ENCODE measurements at regions of chr3 and their contacts with region 1.

Region 1: DNA sequence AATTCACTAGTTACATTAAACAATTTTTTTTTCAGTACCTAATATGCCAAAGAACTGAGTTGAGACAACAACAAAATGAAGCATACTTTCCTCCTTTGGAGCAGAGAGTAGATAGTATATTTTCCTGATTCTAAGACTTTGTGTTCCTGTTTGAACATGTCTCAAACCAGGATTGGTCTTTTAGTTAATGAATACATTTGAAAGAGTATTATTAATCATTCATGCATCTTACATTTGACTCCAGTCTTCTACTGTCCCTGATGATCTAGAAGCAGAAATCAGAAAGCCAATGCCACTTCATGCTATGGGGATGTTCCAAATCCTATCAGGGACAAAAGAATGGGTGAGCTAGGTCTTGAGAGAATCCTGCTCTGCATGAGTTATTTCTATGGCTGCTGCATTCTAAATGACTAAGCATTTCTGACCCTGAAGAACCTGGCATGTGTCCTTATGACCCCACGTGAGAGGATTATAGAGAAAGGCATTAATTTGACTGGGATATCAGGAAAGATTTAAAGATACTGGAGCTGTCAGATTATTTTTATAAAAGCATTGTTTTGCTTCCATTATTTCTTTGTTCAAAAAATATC is 32.9 kb upstream of the MBNL1 start:
- DNase-seq: no peak
- H3K4me3 Mint-ChIP-seq: peak overlapping the region; percentile 9
- H3K27ac Mint-ChIP-seq: peak overlapping the region; percentile 75
- H3K4me1 Mint-ChIP-seq: peaks cover 84% of the 10 kb centered on the region
- H3K27me3 Mint-ChIP-seq: no peaks in the 10 kb centered on the region

Region 2: DNA sequence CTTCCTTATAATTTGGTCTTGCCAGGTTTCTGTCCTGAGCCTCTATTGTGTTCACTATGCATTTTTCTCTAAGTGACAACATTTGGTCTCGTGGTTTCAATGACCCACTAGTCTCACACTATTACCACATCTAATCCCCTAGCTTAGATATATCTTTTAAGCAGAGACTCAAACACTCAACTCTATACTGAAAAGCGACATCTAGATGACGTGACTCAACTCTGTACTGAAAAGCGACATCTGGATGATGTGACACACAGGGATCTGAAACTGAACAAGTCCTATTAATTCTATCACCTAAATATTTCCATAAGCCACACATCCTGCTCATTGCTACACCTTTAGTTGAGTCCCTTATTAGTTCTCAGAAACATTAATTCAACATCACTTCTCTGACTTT is 108.7 kb before region 1 on chr3:
- CTCF ChIA-PET with region 1: no interaction called
- intact Hi-C with region 1: loop called (anchors 5 kb)
- DNase-seq: peak; percentile 53
- H3K4me3 Mint-ChIP-seq: no peak overlapping the region
- H3K27ac Mint-ChIP-seq: no peak overlapping the region
- H3K4me1 Mint-ChIP-seq: peaks cover 29% of the 10 kb centered on the region
- H3K27me3 Mint-ChIP-seq: no peaks in the 10 kb centered on the region

Region 3: GRCh38 chr3:152205097-152205593 is 30.7 kb before region 1 on chr3:
- CTCF ChIA-PET with region 1: interaction called, 4 read pairs
- intact Hi-C with region 1: loop called (anchors 1 kb)
- DNase-seq: no peak
- H3K4me3 Mint-ChIP-seq: peak overlapping the region; percentile 89
- H3K27ac Mint-ChIP-seq: peak overlapping the region; percentile 99
- H3K4me1 Mint-ChIP-seq: peaks cover 67% of the 10 kb centered on the region
- H3K27me3 Mint-ChIP-seq: no peaks in the 10 kb centered on the region

Region 4: GRCh38 chr3:152564459-152564858 is 328.7 kb after region 1 on chr3:
- CTCF ChIA-PET with region 1: no interaction called
- intact Hi-C with region 1: no loop called
- DNase-seq: no peak
- H3K4me3 Mint-ChIP-seq: no peak overlapping the region
- H3K27ac Mint-ChIP-seq: no peak overlapping the region
- H3K4me1 Mint-ChIP-seq: no peaks in the 10 kb centered on the region
- H3K27me3 Mint-ChIP-seq: peaks cover 2% of the 10 kb centered on the region

Measured in activated naive CD4-positive, alpha-beta T cell treated with anti-CD3 and anti-CD28 coated beads for 36 hours (primary cell).